ENCODE measurements at regions of chr21 and their contacts with region 1.

Region 1: DNA sequence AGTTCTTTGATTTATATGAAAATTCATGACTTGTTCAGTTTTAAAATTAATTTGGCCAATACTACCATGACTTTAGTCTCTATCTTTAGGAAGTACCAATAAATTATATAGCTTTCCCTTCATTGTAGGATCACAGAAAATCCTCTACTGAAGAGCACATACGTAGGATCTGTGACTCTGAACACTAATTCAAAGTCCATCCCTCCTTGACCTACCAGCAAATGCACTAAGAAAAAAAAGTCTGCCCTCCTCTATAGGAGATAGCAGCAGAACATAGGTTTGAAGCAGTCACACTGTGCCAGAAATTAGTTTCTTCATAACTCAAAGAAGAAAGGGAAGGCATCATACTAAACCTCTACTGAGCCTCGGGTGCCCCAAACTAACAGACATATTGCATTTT is 16.5 kb downstream of the BRWD1 start:
- DNase-seq: no peak
- ATAC-seq: no peak
- H3K4me3 ChIP-seq: no peak overlapping the region
- H3K27ac ChIP-seq: no peak overlapping the region
- H3K4me1 ChIP-seq: no peaks in the 10 kb centered on the region
- H3K27me3 ChIP-seq: no peaks in the 10 kb centered on the region
- CTCF ChIP-seq: no peak
- EP300 ChIP-seq: no peak
- POLR2A ChIP-seq: no peak
- RAD21 ChIP-seq: no peak

Region 2: DNA sequence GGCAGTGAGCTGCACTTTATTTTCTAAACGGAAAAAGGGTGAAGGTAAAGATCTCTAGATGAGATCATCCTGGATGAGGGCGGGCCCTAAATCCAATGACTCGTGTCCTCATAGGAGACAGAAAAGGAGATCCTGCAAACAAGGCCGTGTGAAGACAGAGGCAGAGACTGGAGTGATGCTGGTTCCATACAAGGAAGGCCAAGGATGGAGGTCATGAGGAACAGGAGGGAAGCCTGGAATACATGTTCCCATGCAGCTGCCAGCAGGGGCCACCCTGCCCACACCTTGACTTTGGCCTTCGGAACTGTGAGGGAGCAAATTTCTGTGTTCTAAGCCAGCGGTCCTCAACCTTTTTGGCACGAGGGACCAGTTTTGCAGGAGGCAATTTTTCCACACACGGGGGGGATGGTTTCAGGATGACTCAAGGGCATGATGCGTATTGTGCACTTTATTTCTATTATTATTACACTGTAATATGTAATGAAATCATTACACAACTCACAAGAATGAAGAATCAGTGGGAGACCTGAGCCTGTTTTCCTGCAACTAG is 208.0 kb before region 1 on chr21:
- CTCF ChIA-PET with region 1: no interaction called
- POLR2A ChIA-PET with region 1: no interaction called
- in situ Hi-C with region 1: no loop called
- intact Hi-C with region 1: no loop called
- DNase-seq: peak; percentile 29 to 43 (median 38)
- ATAC-seq: peak; percentile 69
- H3K4me3 ChIP-seq: no peak overlapping the region
- H3K27ac ChIP-seq: no peak overlapping the region
- H3K4me1 ChIP-seq: peaks cover 0 to 6% of the 10 kb centered on the region in 2 experiments; a peak in 2 of 5 replicates
- H3K27me3 ChIP-seq: peaks cover 65 to 89% of the 10 kb centered on the region in 2 experiments
- CTCF ChIP-seq: peak; percentile 44 to 72 (median 68)
- EP300 ChIP-seq: no peak
- POLR2A ChIP-seq: no peak
- RAD21 ChIP-seq: peak; percentile 25 to 73

Region 3: DNA sequence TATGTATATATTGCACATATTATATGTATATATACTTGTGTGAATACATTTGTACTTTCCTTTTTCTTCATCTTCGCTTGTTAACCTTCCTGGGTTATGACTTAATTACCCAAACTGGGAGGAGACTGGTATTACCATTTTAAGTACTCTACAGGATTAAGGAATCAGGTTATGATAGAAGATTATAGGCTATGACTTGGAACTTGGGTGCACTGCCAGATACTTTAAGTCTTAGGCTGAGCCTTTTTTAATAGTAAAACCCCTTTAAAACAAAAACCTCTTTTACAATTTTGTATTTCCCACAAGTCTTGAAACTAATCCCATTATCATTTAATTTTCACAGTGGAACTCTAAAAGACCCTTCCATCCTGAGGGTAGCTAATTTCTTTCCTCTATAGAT is 10.6 kb after region 1 on chr21:
- CTCF ChIA-PET with region 1: no interaction called
- POLR2A ChIA-PET with region 1: interaction called, 17 read pairs
- in situ Hi-C with region 1: no loop called
- intact Hi-C with region 1: no loop called
- DNase-seq: no peak
- ATAC-seq: no peak
- H3K4me3 ChIP-seq: no peak overlapping the region
- H3K27ac ChIP-seq: no peak overlapping the region
- H3K4me1 ChIP-seq: peaks cover 3 to 5% of the 10 kb centered on the region in 2 experiments; a peak in 2 of 5 replicates
- H3K27me3 ChIP-seq: no peaks in the 10 kb centered on the region
- CTCF ChIP-seq: no peak
- EP300 ChIP-seq: no peak
- POLR2A ChIP-seq: no peak
- RAD21 ChIP-seq: no peak